Activated T-helper 1 cell treated with anti-CD3 and anti-CD28 coated beads, Interleukin-12 subunit alpha, Interleukin-12 subunit beta, Interleukin-2, Interleukin-4 antibody, amounts not matched to agents 30 ng/mL and 10 ng/mL and 1 ng/mL, durations not matched to agents 14 hours and 24 hours and 36 hours (primary cell): ENCODE measurements at regions of chr1 and their contacts with region 1.

Region 1: DNA sequence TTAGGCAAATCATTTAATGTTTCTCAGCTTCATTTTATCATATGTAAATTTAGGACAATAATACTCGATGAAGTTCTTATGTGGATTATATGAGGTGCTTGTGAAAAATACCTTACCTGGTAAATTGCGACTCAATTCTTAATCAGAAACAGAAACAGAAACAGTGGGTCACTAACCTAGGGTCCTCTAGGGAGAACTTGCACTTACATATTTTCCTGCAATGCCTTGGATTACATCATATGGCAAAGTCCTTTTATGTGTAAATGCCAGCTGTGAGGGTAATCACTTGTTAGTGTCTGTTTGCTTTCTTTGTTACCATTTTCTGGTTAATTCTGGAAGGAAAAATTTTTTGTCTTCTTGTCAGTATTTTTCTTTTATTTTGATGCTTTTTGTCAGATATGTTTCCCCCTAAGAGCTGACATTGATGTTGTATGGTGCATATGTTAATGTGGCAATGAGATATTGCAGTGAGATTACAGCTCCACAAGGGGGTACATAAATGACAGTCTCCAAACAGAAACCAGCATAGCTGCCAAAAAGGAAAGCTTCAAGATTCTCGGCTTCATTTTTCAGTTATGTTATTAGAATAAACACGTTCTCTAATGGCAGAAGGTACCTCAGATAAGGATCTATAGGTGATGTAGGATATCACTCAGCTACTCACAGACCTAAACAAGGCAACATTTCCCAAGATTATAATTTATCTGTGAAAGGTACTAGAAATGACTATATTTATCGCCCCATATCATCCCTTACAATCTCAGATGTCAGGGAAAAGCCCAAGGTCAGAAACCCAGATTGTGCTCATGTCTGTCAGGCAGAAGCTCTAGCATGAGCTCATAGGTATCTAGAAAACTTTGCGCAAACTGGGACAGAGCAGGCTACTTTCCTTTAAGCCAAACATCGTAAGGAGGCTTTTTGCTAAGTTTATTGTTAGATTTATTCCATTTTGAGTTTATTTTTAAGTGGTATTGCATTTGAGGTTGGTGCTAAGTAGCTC is 119.9 kb downstream of the FASLG start:
- DNase-seq: no peak
- H3K4me3 Mint-ChIP-seq: no peak overlapping the region
- H3K27ac Mint-ChIP-seq: no peak overlapping the region
- H3K4me1 Mint-ChIP-seq: peaks cover 11% of the 10 kb centered on the region
- H3K27me3 Mint-ChIP-seq: peaks cover 21% of the 10 kb centered on the region

Region 2: DNA sequence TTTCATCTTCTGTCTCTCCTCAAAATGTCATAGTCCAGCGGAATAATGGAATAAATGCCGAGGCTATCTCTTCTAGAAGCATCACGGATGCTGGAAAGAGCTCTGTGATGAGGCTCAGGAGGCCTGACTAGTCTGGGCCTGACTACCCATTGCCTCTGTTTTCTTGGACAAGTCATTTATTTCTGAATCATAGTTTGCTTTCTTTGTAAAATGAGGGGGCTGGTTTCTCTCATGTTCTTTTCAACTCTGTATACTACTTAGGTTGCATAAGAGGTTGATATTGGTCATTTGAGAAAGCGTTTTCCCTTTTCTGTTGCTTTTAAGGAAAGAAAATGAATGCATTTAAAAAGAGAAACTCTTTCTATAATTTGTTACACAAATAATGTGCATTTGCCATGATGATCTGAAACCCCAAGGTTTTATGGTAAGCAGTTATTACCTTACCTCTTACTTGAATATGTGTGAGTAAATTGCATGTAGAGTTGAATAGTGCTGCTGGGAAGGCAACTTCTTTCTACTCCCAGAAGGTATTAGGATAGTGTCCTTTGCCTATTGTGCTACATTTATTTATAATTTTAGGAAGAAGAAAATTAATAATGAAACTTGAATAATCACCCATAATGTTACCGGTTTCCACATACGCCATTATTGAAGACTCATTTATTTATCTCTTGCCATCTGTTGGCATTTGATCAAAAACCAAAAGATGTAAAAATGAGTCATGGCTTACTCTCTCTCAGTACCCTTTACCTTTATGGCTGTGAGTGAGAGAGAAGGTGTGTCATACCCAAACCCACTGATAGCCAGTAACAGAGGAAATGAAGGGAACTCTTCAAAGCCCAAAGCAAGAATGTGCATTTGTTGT is 59.3 kb after region 1 on chr1:
- intact Hi-C with region 1: loop called (anchors 1 kb)
- DNase-seq: peak; percentile 29
- H3K4me3 Mint-ChIP-seq: no peak overlapping the region
- H3K27ac Mint-ChIP-seq: peak overlapping the region; percentile 26
- H3K4me1 Mint-ChIP-seq: peaks cover 46% of the 10 kb centered on the region
- H3K27me3 Mint-ChIP-seq: peaks cover 65% of the 10 kb centered on the region